ENCODE measurements at regions of chr10 and their contacts with region 1.

Region 1: GRCh38 chr10:63157845-63158624 is 24.9 kb downstream of the NRBF2 start:
- DNase-seq: peak in 2 of 5 donors; percentile 34 to 45
- ATAC-seq: peak; percentile 52 to 76 (median 72)
- H3K4me3 ChIP-seq: no peak overlapping the region
- H3K27ac ChIP-seq: no peak overlapping the region
- H3K4me1 ChIP-seq: peaks cover 0 to 19% (median 8%) of the 10 kb centered on the region in 12 donors
- H3K27me3 ChIP-seq: no peaks in the 10 kb centered on the region
- CTCF ChIP-seq: peak; percentile 71 to 88 (median 81)
- POLR2A ChIP-seq: no peak

Region 2: DNA sequence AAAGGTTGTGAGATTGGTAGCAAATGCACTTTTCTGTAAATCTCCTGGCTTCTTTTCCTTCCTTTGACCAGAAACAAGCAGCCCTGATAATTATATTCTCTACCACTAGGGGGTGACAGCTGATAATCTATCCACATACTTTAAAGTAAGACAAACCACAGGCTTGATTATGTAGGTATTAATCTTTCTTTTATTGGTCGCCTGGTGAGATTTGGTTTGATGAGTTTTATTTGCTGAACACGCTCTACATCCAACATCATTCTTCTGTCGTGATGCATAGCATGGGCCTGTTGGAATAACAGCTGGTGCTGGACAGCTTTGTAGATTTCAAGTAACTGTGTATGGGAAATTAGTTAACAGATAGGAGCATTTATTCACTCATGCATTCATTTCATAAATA is 720.3 kb before region 1 on chr10:
- intact Hi-C with region 1: loop called in 8 of 10 experiments (anchors 2 to 5 kb)
- DNase-seq: no peak
- ATAC-seq: peak in 2 of 4 donors; percentile 57 to 59
- H3K4me3 ChIP-seq: no peak overlapping the region
- H3K27ac ChIP-seq: no peak overlapping the region
- H3K4me1 ChIP-seq: peaks cover 0 to 10% (median 0%) of the 10 kb centered on the region in 12 donors
- H3K27me3 ChIP-seq: no peaks in the 10 kb centered on the region
- CTCF ChIP-seq: peak; percentile 69 to 82 (median 75)
- POLR2A ChIP-seq: no peak

Region 3: GRCh38 chr10:62492012-62492869 is 665.8 kb before region 1 on chr10:
- intact Hi-C with region 1: loop called in 1 of 10 experiments (anchors 5 kb)
- DNase-seq: no peak
- ATAC-seq: peak in 3 of 4 donors; percentile 28 to 68 (median 43)
- H3K4me3 ChIP-seq: no peak overlapping the region
- H3K27ac ChIP-seq: peak overlapping the region in 2 of 12 donors; percentile 28 to 56
- H3K4me1 ChIP-seq: peaks cover 0 to 20% (median 0%) of the 10 kb centered on the region in 12 donors
- H3K27me3 ChIP-seq: peaks cover 0 to 5% (median 0%) of the 10 kb centered on the region in 9 donors
- CTCF ChIP-seq: peak; percentile 12 to 48 (median 36)
- POLR2A ChIP-seq: no peak

Region 4: DNA sequence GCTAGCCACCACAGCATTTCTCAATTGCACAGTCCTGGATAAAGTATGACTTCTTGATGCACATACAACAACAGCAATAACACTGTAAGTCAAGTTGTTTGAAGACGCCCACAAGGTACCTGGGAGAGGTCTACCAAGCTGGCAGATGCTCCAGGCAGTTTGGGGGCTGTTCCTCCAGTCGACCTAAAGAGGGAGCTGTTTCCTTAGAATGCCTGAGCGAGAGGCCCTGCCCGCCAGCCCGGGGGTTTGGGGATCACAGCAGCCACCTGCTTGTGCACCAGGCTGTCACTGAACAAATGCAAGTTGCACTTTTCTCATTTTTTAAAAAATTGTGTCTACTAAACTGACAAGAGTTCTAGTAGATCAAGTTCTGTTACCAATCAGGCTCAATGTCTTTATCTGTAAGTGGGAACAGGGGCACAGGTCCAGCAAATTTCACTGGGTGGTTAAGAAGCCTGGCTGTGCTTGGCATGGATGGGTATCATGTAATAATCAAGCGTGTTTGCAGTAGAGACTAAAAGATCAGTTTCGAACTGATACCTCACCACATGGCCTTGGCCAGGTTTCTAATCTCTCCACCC is 547.3 kb before region 1 on chr10:
- intact Hi-C with region 1: loop called in 2 of 10 experiments (anchors 5 kb)
- DNase-seq: peak; percentile 40 to 72 (median 54)
- ATAC-seq: peak in 3 of 4 donors; percentile 74 to 83 (median 80)
- H3K4me3 ChIP-seq: no peak overlapping the region
- H3K27ac ChIP-seq: no peak overlapping the region
- H3K4me1 ChIP-seq: peaks cover 0 to 19% (median 0%) of the 10 kb centered on the region in 12 donors
- H3K27me3 ChIP-seq: peaks cover 0 to 3% (median 0%) of the 10 kb centered on the region in 9 donors
- CTCF ChIP-seq: peak; percentile 66 to 85 (median 78)
- POLR2A ChIP-seq: no peak

Region 5: DNA sequence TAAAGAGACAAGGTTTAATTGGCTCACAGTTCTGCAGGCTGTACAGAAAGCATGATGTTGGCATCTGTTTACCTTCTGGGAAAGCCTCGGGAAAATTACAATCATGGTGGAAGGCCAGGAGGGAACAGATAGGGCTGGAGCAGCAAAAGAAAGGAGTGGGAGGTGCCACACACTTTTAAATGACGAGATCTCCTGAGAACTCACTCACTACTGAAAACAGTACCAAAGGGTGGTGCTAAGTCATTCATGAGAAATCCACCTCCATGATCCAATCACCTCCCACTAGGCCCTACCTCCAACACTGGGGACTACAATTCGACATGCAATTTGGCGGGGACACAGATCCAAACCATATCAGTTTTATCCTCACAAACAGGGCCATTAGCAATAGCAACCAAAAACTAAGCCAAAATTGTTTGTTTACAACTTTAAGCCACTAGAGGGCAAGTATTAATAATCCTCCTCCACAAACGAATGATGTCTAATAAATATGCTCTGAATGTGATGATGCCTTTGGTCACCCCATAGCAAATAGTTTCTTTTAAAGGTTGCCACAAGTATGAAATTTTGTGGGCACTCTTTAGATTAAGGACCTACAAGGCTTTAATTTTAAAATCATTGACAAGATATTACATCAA is 154.1 kb before region 1 on chr10:
- intact Hi-C with region 1: loop called in 5 of 10 experiments (anchors 5 to 10 kb)
- DNase-seq: no peak
- ATAC-seq: no peak
- H3K4me3 ChIP-seq: no peak overlapping the region
- H3K27ac ChIP-seq: no peak overlapping the region
- H3K4me1 ChIP-seq: no peaks in the 10 kb centered on the region
- H3K27me3 ChIP-seq: peaks cover 0 to 8% (median 0%) of the 10 kb centered on the region in 9 donors
- CTCF ChIP-seq: peak in 11 of 12 donors; percentile 11 to 40 (median 25)
- POLR2A ChIP-seq: no peak

Region 6: DNA sequence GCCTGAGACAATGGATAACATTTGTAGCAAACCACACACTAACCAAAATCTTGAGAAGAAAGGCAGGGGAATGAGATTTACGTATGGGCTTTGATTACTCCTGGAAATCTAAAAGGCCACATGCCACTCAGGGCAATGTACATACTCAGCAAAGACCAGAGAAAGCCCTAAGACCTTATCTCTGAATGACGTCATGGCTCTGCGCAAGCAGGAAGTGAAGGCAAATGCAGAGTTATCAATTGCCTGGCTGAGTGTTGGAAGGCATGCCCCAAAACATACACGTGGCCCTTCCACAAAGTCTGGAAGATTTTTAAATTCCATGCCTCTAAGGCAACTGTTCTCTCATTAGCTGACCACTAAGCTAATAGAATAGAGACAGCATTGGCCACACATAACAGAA is 115.8 kb before region 1 on chr10:
- intact Hi-C with region 1: no loop called
- DNase-seq: no peak
- ATAC-seq: no peak
- H3K4me3 ChIP-seq: no peak overlapping the region
- H3K27ac ChIP-seq: no peak overlapping the region
- H3K4me1 ChIP-seq: no peaks in the 10 kb centered on the region
- H3K27me3 ChIP-seq: peaks cover 0 to 10% (median 0%) of the 10 kb centered on the region in 9 donors
- CTCF ChIP-seq: no peak
- POLR2A ChIP-seq: no peak

Region 7: DNA sequence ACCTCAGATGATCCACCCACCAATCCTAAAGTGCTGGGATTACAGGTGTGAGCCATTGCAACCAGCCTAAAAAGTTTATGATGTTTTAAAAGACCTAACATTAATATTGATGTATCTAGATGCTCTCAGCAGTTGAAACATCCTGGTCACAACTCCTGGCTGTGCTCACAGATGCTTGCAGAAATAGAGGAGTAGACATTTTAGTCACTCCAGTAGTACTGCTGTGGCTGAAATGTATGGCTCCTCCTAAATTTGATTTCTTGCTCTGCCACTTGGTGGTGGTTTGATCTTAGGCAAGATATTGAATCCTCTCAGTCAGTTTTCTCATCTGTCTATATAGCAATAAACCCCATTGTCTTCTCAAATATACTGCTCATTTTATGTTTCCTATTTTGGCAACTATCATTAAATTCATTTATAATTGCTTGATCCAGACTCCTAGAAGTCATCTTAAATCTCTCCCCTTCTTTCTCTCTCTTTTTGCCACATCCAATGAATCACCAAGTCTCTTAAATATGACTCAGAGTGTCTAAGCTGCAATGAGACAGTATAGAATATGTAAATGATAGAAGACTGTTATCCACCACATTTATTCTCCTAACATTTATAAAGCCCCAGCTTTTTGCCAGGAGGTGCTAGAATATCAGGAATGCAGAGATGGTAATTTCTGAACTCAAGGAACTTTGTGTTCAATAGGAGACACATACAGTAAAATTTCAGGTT is 103.0 kb before region 1 on chr10:
- intact Hi-C with region 1: no loop called
- DNase-seq: no peak
- ATAC-seq: no peak
- H3K4me3 ChIP-seq: no peak overlapping the region
- H3K27ac ChIP-seq: no peak overlapping the region
- H3K4me1 ChIP-seq: no peaks in the 10 kb centered on the region
- H3K27me3 ChIP-seq: peaks cover 0 to 6% (median 0%) of the 10 kb centered on the region in 9 donors
- CTCF ChIP-seq: no peak
- POLR2A ChIP-seq: no peak

Region 8: GRCh38 chr10:63093227-63093626 is 64.8 kb before region 1 on chr10:
- intact Hi-C with region 1: loop called in 4 of 10 experiments (anchors 5 to 10 kb)
- DNase-seq: no peak
- ATAC-seq: no peak
- H3K4me3 ChIP-seq: no peak overlapping the region
- H3K27ac ChIP-seq: no peak overlapping the region
- H3K4me1 ChIP-seq: no peaks in the 10 kb centered on the region
- H3K27me3 ChIP-seq: peaks cover 0 to 3% (median 0%) of the 10 kb centered on the region in 9 donors
- CTCF ChIP-seq: no peak
- POLR2A ChIP-seq: no peak